Mammary epithelial cell (primary cell): ENCODE measurements at regions of chr1 and their contacts with region 1.

Region 1: GRCh38 chr1:87318056-87318650 is 10.5 kb upstream of the LMO4 start:
- DNase-seq: no peak
- H3K4me3 ChIP-seq: no peak overlapping the region
- H3K27ac ChIP-seq: no peak overlapping the region
- H3K4me1 ChIP-seq: no peaks in the 10 kb centered on the region
- H3K27me3 ChIP-seq: peaks cover 6% of the 10 kb centered on the region
- CTCF ChIP-seq: no peak

Region 2: DNA sequence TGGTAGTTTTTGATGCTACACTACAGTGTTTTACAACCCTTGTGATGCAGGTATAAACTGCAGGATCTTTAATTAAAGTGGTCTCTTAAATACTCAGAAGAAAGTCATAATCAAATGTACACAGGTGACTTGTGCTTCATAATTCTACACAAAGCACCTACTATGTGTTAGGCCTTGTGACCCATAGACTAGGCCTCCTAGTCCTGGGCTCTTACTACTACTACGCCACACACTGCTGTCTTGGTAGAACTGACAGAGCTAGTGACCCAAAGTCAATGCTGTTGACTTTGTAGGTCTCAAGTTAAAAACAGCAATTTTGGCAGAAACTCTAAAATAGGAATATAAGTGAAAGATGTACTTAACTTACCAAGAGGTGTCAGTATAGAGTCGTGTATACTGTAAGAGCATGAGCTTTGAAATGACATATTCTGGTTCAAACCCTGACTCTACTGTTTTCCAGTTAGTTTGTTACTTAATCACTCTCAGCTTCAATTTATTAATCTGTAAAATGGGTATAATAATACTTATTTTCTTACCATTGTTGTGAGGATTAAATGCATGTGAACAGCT is 38.1 kb before region 1 on chr1:
- CTCF ChIA-PET with region 1: no interaction called
- dilution Hi-C with region 1: loop called (anchors 5 kb)
- in situ Hi-C with region 1: no loop called
- intact Hi-C with region 1: no loop called
- DNase-seq: no peak
- H3K4me3 ChIP-seq: no peak overlapping the region
- H3K27ac ChIP-seq: no peak overlapping the region
- H3K4me1 ChIP-seq: no peaks in the 10 kb centered on the region
- H3K27me3 ChIP-seq: no peaks in the 10 kb centered on the region
- CTCF ChIP-seq: peak in 1 of 2 donors; percentile 3